OCI-LY7 (cell line): ENCODE measurements at regions of chr3 and their contacts with region 1.

Region 1: GRCh38 chr3:56629047-56629446 is 54.0 kb downstream of the TASOR start:
- DNase-seq: no peak
- H3K4me3 ChIP-seq: no peak overlapping the region
- H3K27ac ChIP-seq: no peak overlapping the region
- H3K4me1 ChIP-seq: no peaks in the 10 kb centered on the region
- CTCF ChIP-seq: no peak

Region 2: GRCh38 chr3:56645407-56645806 is 16.4 kb after region 1 on chr3:
- CTCF ChIA-PET with region 1: no interaction called
- POLR2A ChIA-PET with region 1: interaction called, 15 read pairs
- intact Hi-C with region 1: no loop called
- DNase-seq: no peak
- H3K4me3 ChIP-seq: no peak overlapping the region
- H3K27ac ChIP-seq: no peak overlapping the region
- H3K4me1 ChIP-seq: no peaks in the 10 kb centered on the region
- CTCF ChIP-seq: no peak

Region 3: DNA sequence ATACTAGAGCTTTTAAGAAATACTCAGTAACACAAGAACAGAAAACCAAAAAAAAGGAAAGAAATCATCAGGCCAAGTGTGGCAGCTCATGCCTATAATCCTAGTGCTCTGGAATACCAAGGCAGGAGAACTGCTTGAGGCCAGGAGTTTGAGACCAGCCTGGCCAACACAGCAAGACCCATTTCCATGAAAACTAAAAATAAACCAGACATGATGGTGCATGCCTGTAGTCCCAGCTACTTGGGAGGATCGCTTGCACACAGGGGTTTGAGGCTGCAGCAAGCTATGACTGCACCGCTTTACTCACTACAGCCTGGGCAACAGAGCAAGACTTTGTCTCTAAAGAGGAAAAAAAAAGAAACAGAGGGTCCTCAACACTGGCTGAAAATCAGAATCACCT is 35.8 kb after region 1 on chr3:
- CTCF ChIA-PET with region 1: no interaction called
- POLR2A ChIA-PET with region 1: interaction called, 3 read pairs
- intact Hi-C with region 1: loop called (anchors 5 kb)
- DNase-seq: no peak
- H3K4me3 ChIP-seq: no peak overlapping the region
- H3K27ac ChIP-seq: no peak overlapping the region
- H3K4me1 ChIP-seq: no peaks in the 10 kb centered on the region
- CTCF ChIP-seq: no peak